Activated CD4-positive, alpha-beta memory T cell treated with anti-CD3 and anti-CD28 coated beads, Interleukin-2, amount 10 ng/mL, durations not matched to agents 7 days and 5 days (primary cell): ENCODE measurements at regions of chr11 and their contacts with region 1.

Region 1: GRCh38 chr11:72030472-72031045 is 31.9 kb downstream of the IL18BP start:
- DNase-seq: no peak
- H3K4me3 Mint-ChIP-seq: no peak overlapping the region
- H3K27ac Mint-ChIP-seq: no peak overlapping the region
- H3K4me1 Mint-ChIP-seq: peaks cover 13% of the 10 kb centered on the region
- H3K27me3 Mint-ChIP-seq: no peaks in the 10 kb centered on the region

Region 2: DNA sequence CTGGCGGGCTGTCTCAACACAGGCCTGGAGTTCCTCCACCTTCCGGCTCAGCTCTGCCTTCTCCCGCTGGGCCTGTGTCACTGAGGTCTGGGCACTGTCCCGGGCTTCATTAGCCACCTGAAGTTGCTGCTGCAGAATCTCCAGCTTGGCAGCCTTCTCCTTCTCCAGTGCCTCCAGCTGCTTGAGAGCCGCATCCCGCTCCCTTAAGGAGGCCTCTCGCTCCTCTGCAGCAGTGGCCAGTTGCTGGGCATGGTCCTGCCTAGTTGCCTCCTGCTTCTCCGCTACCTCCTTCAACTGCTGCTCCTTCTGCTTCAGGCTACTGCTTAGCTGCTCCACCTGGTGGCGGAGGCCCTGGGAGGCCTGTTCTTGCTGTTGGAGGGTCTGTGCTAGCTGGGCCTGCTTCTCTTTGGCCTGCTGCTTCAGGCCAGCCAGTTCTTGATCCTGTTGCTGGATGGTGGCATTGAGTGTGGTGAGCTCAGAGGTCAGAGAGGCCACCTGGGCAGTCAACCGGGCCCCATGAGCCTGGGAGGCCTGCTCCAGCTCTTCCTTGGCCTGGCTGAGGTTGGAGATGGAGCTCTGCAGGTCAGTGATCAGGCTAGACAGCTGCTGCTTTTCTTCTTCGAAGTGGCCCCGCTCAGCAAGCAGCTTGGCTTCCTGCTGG is 14.9 kb before region 1 on chr11:
- CTCF ChIA-PET with region 1: interaction called, 30 read pairs
- POLR2A ChIA-PET with region 1: no interaction called
- DNase-seq: no peak
- H3K4me3 Mint-ChIP-seq: no peak overlapping the region
- H3K27ac Mint-ChIP-seq: no peak overlapping the region
- H3K4me1 Mint-ChIP-seq: no peaks in the 10 kb centered on the region
- H3K27me3 Mint-ChIP-seq: no peaks in the 10 kb centered on the region

Region 3: DNA sequence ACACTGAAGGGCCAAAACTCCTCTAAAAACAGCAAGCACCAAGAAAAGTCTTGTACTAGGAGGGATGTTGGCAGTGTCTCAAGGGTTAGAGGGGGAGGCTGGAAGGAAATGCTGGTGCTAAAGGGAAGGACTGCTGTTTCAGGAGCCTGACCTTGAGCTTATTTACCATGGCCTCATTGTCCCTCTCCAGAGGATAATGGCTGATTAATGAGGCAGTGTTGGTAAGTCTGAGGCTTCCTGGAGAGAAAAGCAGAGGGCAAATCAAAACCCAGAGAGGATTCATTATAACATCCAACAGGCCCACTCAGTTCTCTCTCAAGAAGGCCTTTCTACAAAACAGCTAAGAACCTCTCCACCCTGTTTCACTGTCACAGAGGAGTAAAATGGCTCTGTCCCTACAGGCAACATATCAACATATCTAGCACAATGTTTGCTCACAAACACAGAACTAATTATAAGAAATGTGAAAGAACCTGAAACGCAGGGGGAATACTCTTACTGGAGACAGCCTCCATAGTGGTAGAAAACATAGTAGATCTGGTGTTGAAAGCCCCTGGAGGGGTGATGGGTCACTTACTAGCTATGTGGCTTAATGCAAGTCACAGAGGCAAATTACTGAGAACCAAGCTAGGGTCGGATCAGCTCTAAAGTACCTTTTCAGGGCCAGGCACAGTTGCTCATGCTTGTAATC is 18.4 kb after region 1 on chr11:
- CTCF ChIA-PET with region 1: interaction called, 14 read pairs
- POLR2A ChIA-PET with region 1: interaction called, 3 read pairs
- DNase-seq: no peak
- H3K4me3 Mint-ChIP-seq: no peak overlapping the region
- H3K27ac Mint-ChIP-seq: no peak overlapping the region
- H3K4me1 Mint-ChIP-seq: peaks cover 8% of the 10 kb centered on the region
- H3K27me3 Mint-ChIP-seq: no peaks in the 10 kb centered on the region

Region 4: GRCh38 chr11:72091005-72091691 is 60.6 kb after region 1 on chr11:
- CTCF ChIA-PET with region 1: interaction called, 104 read pairs
- POLR2A ChIA-PET with region 1: interaction called, 8 read pairs
- DNase-seq: peak; percentile 66
- H3K4me3 Mint-ChIP-seq: no peak overlapping the region
- H3K27ac Mint-ChIP-seq: no peak overlapping the region
- H3K4me1 Mint-ChIP-seq: peaks cover 18% of the 10 kb centered on the region
- H3K27me3 Mint-ChIP-seq: no peaks in the 10 kb centered on the region

Region 5: DNA sequence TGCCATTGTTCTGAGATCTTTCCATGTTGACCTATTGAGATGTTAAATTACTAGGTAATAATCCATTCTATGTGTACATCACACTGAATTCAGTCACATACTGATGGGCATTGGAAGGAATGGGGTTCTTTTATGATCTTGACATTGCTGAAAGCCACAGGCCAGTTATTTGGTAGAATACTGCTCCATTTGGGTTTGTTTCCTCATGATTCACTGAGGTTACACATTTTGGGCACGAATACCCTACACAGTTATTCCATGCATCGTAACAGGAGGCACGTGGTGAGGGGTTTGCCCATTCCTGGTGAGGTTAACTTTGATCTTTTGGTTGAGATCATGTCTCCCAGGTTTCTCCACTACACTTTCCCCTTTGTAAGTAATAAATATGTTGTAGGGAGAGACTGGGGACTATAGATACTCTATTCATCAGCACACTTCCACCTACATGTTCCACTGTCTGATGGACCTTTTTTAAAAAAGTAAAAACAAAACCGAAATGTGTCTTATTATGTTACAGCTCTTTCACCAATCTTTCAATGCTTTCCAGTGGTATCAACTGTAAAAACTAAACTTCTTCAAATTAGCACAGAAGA is 149.3 kb after region 1 on chr11:
- CTCF ChIA-PET with region 1: interaction called, 15 read pairs
- POLR2A ChIA-PET with region 1: no interaction called
- DNase-seq: no peak
- H3K4me3 Mint-ChIP-seq: no peak overlapping the region
- H3K27ac Mint-ChIP-seq: no peak overlapping the region
- H3K4me1 Mint-ChIP-seq: peaks cover 10% of the 10 kb centered on the region
- H3K27me3 Mint-ChIP-seq: peaks cover 13% of the 10 kb centered on the region